Activated CD4-positive, alpha-beta memory T cell treated with anti-CD3 and anti-CD28 coated beads for 36 hours (primary cell): ENCODE measurements at regions of chr6 and their contacts with region 1.

Region 1: DNA sequence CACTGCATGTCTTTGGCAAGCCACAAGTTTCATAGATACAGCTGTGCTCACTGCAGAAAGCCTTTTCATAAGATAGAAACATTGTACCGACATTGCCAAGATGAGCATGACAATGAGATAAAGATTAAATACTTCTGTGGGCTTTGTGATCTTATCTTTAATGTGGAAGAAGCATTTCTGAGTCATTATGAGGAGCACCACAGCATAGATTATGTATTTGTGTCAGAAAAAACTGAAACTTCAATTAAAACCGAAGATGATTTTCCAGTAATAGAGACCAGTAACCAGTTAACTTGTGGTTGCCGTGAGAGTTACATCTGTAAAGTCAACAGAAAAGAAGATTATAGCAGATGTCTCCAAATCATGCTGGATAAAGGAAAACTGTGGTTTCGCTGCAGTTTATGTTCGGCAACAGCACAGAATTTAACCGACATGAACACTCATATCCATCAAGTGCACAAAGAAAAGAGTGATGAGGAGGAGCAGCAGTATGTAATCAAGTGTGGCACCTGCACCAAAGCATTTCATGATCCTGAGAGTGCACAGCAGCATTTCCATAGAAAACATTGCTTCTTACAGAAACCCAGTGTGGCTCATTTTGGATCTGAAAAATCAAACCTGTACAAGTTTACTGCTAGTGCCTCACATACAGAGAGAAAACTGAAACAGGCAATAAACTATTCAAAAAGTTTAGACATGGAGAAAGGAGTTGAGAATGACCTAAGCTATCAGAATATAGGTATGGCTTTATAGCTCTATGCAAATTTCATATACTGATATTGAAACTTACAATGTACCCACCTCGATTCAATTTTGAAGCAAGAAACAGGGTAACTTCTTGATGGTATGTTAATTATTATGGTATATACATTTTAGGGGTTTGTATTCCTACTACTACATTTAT is 23.9 kb upstream of the BAG2 start:
- DNase-seq: peak; percentile 18
- H3K4me3 Mint-ChIP-seq: peak overlapping the region; percentile 30
- H3K27ac Mint-ChIP-seq: peak overlapping the region; percentile 79
- H3K4me1 Mint-ChIP-seq: peaks cover 32% of the 10 kb centered on the region
- H3K27me3 Mint-ChIP-seq: no peaks in the 10 kb centered on the region

Region 2: GRCh38 chr6:57089687-57090460 is 58.3 kb before region 1 on chr6 and contains the start of gene ZNF451:
- CTCF ChIA-PET with region 1: no interaction called
- POLR2A ChIA-PET with region 1: no interaction called
- intact Hi-C with region 1: loop called (anchors 1 kb)
- DNase-seq: peak; percentile 99
- H3K4me3 Mint-ChIP-seq: peak within 1 kb of the TSS; percentile 85
- H3K27ac Mint-ChIP-seq: peak within 1 kb of the TSS; percentile 92
- H3K4me1 Mint-ChIP-seq: peaks cover 30% of the 10 kb centered on the region
- H3K27me3 Mint-ChIP-seq: no peaks in the 10 kb centered on the region
- total RNA-seq, gene ZNF451: 38.2 to 41.4 TPM

Region 3: DNA sequence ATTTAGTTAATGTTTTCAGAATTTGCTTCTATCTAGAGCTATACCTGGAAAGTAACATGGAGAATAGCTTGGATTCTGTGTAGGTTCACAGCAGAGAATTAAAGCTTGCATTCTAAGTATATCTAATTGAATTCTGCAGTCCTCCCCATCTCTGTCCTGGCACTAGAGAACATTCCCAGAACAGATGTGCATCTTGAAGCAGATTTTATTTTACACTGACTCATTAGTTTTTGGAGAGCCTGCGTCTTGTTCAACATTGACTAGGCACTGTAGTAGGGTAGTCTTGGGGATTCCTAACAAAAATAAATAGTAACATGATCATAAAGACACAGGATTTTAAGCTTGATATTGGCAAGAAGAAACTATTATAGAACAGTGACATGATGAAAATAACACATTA is 12.3 kb before region 1 on chr6:
- CTCF ChIA-PET with region 1: no interaction called
- POLR2A ChIA-PET with region 1: no interaction called
- intact Hi-C with region 1: loop called (anchors 1 kb)
- DNase-seq: no peak
- H3K4me3 Mint-ChIP-seq: no peak overlapping the region
- H3K27ac Mint-ChIP-seq: no peak overlapping the region
- H3K4me1 Mint-ChIP-seq: peaks cover 7% of the 10 kb centered on the region
- H3K27me3 Mint-ChIP-seq: no peaks in the 10 kb centered on the region